Endothelial cell of umbilical vein (primary cell): ENCODE measurements at regions of chr7 and their contacts with region 1.

Region 1: DNA sequence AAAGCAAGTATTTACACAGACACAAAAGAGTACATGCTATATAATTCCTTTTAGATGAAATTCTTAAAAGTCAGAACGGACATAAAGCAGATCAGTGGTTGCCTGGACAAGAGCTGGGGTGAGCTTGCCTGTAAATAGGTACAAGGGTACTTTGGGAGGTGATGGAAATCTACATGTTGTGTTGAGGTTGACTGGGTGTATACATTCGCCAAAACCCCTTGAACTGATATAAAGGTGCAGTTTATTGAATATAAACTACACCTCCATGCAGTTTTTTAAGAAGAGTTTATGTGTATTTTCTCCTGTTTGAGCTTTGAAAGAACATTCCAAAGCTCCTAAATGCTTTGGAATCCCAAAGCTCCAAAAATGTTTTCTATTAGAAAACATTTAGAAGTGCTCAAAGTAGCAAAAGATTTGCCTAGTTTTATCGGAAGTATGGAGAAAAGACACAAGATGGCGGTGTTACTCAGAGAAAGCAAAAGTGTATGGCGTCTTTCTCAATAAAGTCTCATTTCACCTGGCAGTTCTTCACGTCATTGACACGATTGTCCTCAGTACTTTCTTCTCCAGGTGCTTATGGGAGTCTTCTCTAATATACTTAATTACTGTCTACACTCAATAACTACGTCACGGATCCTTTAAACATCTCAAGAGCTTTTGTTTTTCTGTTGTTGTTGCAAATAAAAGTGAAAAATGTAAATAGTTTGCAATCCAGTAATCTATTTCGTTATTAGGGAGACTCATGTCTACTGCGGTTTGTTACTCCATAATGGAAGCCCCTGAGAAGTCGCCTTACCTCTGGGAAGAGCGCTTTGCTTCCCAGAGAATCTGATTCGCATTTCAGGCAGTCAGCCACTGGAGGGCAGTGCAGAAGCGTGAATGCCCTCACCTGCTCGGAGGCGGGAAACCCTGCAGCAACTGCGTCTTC is 14.7 kb upstream of the SEC61G start:
- DNase-seq: peak; percentile 86
- H3K4me3 ChIP-seq: peak overlapping the region; percentile 13 to 51 (median 20)
- H3K27ac ChIP-seq: no peak overlapping the region
- H3K4me1 ChIP-seq: peaks cover 8% of the 10 kb centered on the region
- H3K27me3 ChIP-seq: peaks cover 0 to 2% of the 10 kb centered on the region in 2 experiments
- CTCF ChIP-seq: peak; percentile 77 to 85
- POLR2A ChIP-seq: no peak

Region 2: GRCh38 chr7:54678763-54679489 is 94.8 kb before region 1 on chr7:
- CTCF ChIA-PET with region 1: no interaction called
- POLR2A ChIA-PET with region 1: no interaction called
- dilution Hi-C with region 1: no loop called
- intact Hi-C with region 1: no loop called
- DNase-seq: no peak
- H3K4me3 ChIP-seq: no peak overlapping the region
- H3K27ac ChIP-seq: no peak overlapping the region
- H3K4me1 ChIP-seq: no peaks in the 10 kb centered on the region
- H3K27me3 ChIP-seq: no peaks in the 10 kb centered on the region
- CTCF ChIP-seq: no peak
- POLR2A ChIP-seq: no peak

Region 3: DNA sequence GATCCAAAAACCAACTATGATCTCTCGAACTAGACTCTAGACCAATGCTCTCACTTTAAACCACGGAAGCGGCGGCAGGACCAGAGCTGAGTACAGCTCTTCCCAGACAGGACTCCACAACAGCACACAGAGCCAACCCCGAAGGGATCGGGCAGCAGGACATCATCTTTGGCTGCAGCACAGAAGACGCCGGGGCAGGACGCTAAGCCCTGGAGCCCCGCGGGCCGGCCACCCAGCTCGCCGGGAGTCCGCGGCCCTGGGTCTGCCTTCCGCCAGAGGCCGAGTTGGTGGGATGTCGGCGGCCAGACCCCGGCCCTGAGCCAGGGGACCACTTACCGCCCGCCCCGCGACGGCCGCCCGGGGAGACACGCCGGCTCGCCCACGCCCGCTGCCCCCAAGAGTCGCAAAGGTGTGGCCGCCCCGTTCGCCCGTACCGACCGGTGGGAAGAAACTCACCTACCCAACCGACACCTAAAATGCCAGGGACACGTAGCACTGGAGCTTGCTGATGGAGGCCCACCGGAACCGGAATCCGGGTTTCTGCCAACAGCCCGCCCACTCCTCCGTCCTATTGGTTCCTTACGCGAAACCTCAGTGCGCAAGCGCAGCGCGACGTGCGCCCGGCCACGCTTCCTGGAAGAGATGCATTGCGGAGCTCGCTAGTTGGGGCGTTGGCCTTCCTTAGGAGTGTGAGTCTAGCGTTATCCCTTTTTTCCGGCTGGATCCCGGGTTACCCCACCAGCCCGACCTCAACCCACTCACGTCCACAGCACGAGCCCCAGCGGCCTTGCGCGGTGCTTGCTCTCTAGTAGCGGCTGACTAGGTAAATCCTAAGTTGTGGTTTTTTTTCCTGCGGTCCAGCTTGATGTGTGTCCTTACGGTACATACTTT is 14.8 kb before region 1 on chr7 and contains the start of gene SEC61G:
- CTCF ChIA-PET with region 1: interaction called, 11 read pairs
- POLR2A ChIA-PET with region 1: no interaction called
- dilution Hi-C with region 1: no loop called
- intact Hi-C with region 1: no loop called
- DNase-seq: peak; percentile 97
- H3K4me3 ChIP-seq: peak within 1 kb of the TSS; percentile 86 to 94 (median 89)
- H3K27ac ChIP-seq: peak within 1 kb of the TSS; percentile 69
- H3K4me1 ChIP-seq: peaks cover 20% of the 10 kb centered on the region
- H3K27me3 ChIP-seq: peaks cover 0 to under 1% of the 10 kb centered on the region in 2 experiments
- CTCF ChIP-seq: no peak
- POLR2A ChIP-seq: peak; percentile 97
- total RNA-seq, gene SEC61G: 201 and 206 TPM in 2 replicates

Region 4: DNA sequence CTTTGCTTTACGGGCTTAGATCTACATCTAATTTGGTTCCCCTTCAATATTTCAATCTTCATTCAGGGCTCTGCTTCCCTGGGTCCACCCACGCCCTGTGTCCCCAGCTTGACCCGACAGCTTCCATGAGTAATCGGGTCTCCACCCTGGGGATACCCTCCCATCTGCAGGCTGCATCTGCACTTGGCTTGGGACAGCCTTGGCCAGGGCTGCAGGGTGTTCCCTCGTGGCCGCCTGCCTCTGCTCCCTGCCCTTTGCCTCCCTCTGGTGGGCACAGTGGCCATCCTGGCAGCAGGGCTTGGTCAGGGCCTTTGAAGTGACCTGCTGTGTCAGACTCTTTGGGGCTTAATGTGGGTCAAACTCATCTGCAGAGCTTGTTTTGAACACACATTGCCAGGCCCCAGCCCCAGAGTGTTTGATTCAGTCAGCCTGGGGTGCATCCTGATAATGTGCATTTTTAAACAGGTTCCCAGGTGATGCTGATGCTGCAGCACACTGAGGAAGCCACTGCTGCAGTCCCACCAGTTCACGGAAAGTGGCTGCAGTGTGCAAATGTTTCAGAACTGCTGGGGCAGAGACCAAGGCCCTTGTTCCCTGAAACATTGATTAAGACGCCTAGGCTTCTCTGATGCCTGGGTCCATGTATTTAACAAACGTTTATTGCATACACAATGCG is 65.9 kb after region 1 on chr7:
- CTCF ChIA-PET with region 1: interaction called, 14 read pairs
- POLR2A ChIA-PET with region 1: no interaction called
- dilution Hi-C with region 1: no loop called
- intact Hi-C with region 1: loop called (anchors 1 kb)
- DNase-seq: peak; percentile 43
- H3K4me3 ChIP-seq: no peak overlapping the region
- H3K27ac ChIP-seq: no peak overlapping the region
- H3K4me1 ChIP-seq: no peaks in the 10 kb centered on the region
- H3K27me3 ChIP-seq: peaks cover 10% of the 10 kb centered on the region in 2 experiments
- CTCF ChIP-seq: peak; percentile 68 to 78
- POLR2A ChIP-seq: no peak

Region 5: GRCh38 chr7:55030314-55030713 is 256.6 kb after region 1 on chr7:
- CTCF ChIA-PET with region 1: no interaction called
- POLR2A ChIA-PET with region 1: no interaction called
- dilution Hi-C with region 1: no loop called
- intact Hi-C with region 1: no loop called
- DNase-seq: no peak
- H3K4me3 ChIP-seq: no peak overlapping the region
- H3K27ac ChIP-seq: no peak overlapping the region
- H3K4me1 ChIP-seq: no peaks in the 10 kb centered on the region
- H3K27me3 ChIP-seq: no peaks in the 10 kb centered on the region
- CTCF ChIP-seq: no peak
- POLR2A ChIP-seq: no peak

Region 6: GRCh38 chr7:55192718-55193117 is 419.0 kb after region 1 on chr7:
- CTCF ChIA-PET with region 1: no interaction called
- POLR2A ChIA-PET with region 1: no interaction called
- dilution Hi-C with region 1: no loop called
- intact Hi-C with region 1: loop called (anchors 5 kb)
- DNase-seq: peak; percentile 90
- H3K4me3 ChIP-seq: no peak overlapping the region
- H3K27ac ChIP-seq: peak overlapping the region; percentile 80
- H3K4me1 ChIP-seq: peaks cover 42% of the 10 kb centered on the region
- H3K27me3 ChIP-seq: no peaks in the 10 kb centered on the region
- CTCF ChIP-seq: no peak
- POLR2A ChIP-seq: peak; percentile 45

Region 7: DNA sequence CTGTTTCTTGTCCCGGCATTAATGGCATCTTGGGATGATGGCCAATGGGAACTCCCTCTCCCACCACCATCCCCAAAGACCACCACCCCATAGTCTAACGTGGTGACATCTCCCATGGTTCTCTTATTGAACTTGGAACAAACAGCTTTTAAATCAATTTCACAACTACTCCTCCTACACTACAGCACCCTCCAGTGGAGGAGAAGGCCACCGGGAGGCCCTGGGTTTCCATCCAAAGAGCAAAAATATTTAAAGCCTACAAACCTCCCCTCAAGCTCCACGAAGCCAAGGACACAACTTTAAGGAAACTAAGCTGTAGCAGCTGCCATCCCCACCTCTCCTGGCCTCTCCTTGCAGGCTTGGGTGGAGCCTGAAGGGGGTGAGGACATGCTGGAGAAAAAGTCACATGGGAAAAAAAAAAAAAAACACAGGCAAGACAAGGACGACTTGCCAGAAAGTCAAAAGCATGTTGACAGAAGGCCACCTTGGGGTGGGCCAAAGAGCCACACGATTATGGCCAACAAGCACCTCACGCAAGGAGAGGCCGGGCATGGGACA is 497.4 kb after region 1 on chr7:
- CTCF ChIA-PET with region 1: interaction called, 26 read pairs
- POLR2A ChIA-PET with region 1: no interaction called
- dilution Hi-C with region 1: no loop called
- intact Hi-C with region 1: no loop called
- DNase-seq: no peak
- H3K4me3 ChIP-seq: no peak overlapping the region
- H3K27ac ChIP-seq: no peak overlapping the region
- H3K4me1 ChIP-seq: no peaks in the 10 kb centered on the region
- H3K27me3 ChIP-seq: peaks cover 4 to 5% of the 10 kb centered on the region in 2 experiments
- CTCF ChIP-seq: peak; percentile 16 to 22
- POLR2A ChIP-seq: no peak